ENCODE measurements at regions of chr19 and their contacts with region 1.

Region 1: GRCh38 chr19:45370410-45371204 is at the start of gene ERCC2:
- DNase-seq: peak; percentile 97 to 100 (median 98)

Region 2: GRCh38 chr19:45224645-45225044 is 146.0 kb before region 1 on chr19:
- intact Hi-C with region 1: no loop called
- DNase-seq: no peak

Region 3: DNA sequence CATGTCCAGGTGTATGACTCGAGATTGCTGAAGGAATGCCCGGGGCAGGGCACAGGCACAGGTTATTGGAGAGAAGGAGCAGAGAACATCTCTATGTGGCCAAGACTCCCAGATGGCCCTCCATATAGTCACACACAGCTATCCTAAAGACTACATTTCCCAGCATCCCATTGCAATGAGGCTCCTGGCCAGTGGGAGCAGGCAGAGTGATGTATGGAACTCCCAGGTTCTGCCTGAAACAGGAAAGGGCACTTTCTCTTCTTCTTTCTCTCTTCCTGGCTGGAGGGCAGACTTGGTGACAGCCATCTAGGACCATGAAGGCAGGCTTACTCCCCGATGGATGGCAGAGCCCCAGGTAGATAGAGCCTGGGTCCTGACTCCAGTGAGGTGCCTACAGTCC is 20.7 kb after region 1 on chr19:
- intact Hi-C with region 1: no loop called
- DNase-seq: peak in 1 of 10 donors; percentile 7

Region 4: DNA sequence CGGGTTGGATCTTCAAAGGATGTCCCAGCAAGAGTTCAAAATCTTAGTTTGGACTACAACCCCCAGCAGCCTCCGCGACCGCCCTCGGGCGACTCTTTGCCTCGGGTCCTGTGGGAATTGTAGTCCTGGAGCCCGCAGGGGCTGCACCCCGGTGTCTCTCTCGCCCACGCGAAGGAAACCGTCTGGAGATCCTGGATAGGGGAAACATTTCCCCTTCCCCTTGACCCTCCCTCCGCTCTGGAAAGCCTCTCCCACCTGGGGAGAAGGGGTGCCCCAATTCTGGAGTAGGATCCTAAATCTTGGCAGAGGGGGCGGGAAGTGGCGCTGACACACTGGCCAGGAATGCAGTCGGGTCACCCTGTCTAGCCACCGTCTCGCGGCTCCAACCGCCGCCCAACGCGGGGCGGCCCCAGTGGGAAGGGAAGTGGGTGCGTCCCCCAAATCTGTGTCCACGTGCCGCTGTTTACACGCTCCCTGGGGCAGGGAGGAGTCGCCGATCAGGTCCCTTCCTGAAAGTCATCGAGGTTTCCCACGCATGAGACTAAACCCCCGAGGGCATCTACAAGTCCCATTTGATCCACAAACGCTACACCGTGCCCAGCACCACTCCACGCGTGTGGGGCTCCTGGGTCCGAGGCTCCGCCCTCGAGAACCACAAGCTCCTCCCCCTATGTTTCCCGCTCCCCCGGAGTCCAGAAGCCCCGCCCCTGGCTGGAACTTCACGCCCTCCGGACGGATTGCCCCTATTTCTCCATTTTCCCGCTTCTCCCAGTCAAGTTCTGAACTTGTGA is 35.0 kb after region 1 on chr19:
- intact Hi-C with region 1: loop called (anchors 5 kb)
- DNase-seq: peak; percentile 74 to 98 (median 89)

Region 5: GRCh38 chr19:45824041-45824471 is 453.4 kb after region 1 on chr19:
- intact Hi-C with region 1: no loop called
- DNase-seq: peak in 7 of 10 donors; percentile 42 to 94 (median 64)

Measured in posterior cingulate gyrus (tissue), 11 donors.